ENCODE measurements at regions of chr3 and their contacts with region 1.

Region 1: GRCh38 chr3:125916376-125916978 is 52.5 kb upstream of the ROPN1B start:
- DNase-seq: peak; percentile 100
- H3K4me3 Mint-ChIP-seq: peak overlapping the region; percentile 87
- H3K27ac Mint-ChIP-seq: peak overlapping the region; percentile 87
- H3K4me1 Mint-ChIP-seq: peaks cover 32% of the 10 kb centered on the region
- H3K27me3 Mint-ChIP-seq: no peaks in the 10 kb centered on the region
- CTCF ChIP-seq: no peak

Region 2: DNA sequence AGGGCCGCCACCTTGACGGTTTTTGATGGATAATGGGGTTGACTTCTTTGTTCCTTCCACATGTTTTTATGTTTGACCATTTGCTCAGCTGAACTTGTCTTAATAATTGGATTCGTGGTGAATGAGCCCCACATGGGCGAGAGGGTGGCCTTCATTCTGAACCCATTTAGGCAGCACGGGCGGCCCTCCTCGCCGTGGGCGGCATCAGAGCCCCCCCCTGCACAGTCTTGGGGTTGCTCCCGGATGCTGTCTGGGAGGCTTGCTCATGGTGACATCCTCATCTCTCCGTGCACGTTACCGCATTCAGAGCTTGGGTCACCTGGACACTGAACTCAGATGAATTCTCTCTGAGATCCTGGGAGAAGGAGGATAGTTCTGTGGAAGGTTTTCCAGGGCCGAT is 148.8 kb before region 1 on chr3:
- CTCF ChIA-PET with region 1: interaction called, 6 read pairs
- intact Hi-C with region 1: loop called (anchors 5 kb)
- DNase-seq: no peak
- H3K4me3 Mint-ChIP-seq: peak overlapping the region; percentile 84
- H3K27ac Mint-ChIP-seq: no peak overlapping the region
- H3K4me1 Mint-ChIP-seq: peaks cover 10% of the 10 kb centered on the region
- H3K27me3 Mint-ChIP-seq: peaks cover 63% of the 10 kb centered on the region
- CTCF ChIP-seq: no peak

Region 3: GRCh38 chr3:126129181-126129891 is 212.9 kb after region 1 on chr3:
- CTCF ChIA-PET with region 1: no interaction called
- intact Hi-C with region 1: loop called (anchors 10 kb)
- DNase-seq: peak; percentile 86
- H3K4me3 Mint-ChIP-seq: peak overlapping the region; percentile 62
- H3K27ac Mint-ChIP-seq: peak overlapping the region; percentile 63
- H3K4me1 Mint-ChIP-seq: peaks cover 15% of the 10 kb centered on the region
- H3K27me3 Mint-ChIP-seq: peaks cover 9% of the 10 kb centered on the region
- CTCF ChIP-seq: no peak

Region 4: GRCh38 chr3:127019449-127019848 is 1103.0 kb after region 1 on chr3:
- CTCF ChIA-PET with region 1: no interaction called
- intact Hi-C with region 1: no loop called
- DNase-seq: no peak
- H3K4me3 Mint-ChIP-seq: no peak overlapping the region
- H3K27ac Mint-ChIP-seq: no peak overlapping the region
- H3K4me1 Mint-ChIP-seq: no peaks in the 10 kb centered on the region
- H3K27me3 Mint-ChIP-seq: no peaks in the 10 kb centered on the region
- CTCF ChIP-seq: no peak